Activated CD4-positive, alpha-beta T cell treated with anti-CD3 and anti-CD28 coated beads, Interleukin-2, amount 10 ng/mL, durations not matched to agents 7 days and 5 days (primary cell): ENCODE measurements at regions of chr3 and their contacts with region 1.

Region 1: GRCh38 chr3:45105855-45106671 is 40.1 kb downstream of the CDCP1 start:
- DNase-seq: peak; percentile 92
- H3K4me3 Mint-ChIP-seq: peak overlapping the region; percentile 1
- H3K27ac Mint-ChIP-seq: peak overlapping the region; percentile 68
- H3K4me1 Mint-ChIP-seq: peaks cover 86% of the 10 kb centered on the region
- H3K27me3 Mint-ChIP-seq: peaks cover 10% of the 10 kb centered on the region

Region 2: DNA sequence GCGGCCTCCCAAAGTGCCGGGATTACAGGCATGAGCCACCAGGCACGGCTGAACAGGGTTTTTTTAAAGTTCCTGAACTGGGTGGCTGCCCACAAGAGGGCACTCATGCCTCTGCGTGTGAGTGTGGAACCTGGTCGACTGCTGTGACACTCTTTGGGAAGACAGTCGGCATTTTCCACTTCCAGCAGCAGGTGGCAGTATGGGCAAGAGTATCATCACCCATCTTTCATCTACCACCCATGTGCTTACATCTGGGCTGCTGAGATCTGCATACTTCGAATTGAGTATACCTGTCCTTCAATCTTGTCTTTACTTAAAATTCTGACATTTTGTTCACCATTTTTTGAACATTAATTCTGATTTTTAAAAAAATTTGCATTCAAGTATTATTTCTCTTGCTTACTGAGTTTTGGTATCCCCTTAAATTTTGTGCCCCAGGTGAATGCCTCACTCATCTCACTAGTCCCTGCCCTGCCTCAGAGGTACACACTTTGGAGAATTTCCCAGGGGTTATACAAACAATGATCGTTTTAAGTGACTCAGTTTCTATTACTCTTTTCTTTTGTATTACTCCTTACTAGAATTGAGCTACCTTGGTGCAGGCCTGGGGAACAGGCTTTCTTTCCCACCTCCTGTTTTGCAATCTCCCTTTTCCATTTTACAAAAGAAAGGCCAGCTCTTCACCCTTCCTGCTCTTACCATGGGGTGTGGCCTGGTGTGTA is 68.2 kb before region 1 on chr3:
- CTCF ChIA-PET with region 1: interaction called, 11 read pairs
- POLR2A ChIA-PET with region 1: no interaction called
- DNase-seq: peak; percentile 96
- H3K4me3 Mint-ChIP-seq: peak overlapping the region; percentile 9
- H3K27ac Mint-ChIP-seq: peak overlapping the region; percentile 46
- H3K4me1 Mint-ChIP-seq: peaks cover 57% of the 10 kb centered on the region
- H3K27me3 Mint-ChIP-seq: peaks cover 31% of the 10 kb centered on the region

Region 3: DNA sequence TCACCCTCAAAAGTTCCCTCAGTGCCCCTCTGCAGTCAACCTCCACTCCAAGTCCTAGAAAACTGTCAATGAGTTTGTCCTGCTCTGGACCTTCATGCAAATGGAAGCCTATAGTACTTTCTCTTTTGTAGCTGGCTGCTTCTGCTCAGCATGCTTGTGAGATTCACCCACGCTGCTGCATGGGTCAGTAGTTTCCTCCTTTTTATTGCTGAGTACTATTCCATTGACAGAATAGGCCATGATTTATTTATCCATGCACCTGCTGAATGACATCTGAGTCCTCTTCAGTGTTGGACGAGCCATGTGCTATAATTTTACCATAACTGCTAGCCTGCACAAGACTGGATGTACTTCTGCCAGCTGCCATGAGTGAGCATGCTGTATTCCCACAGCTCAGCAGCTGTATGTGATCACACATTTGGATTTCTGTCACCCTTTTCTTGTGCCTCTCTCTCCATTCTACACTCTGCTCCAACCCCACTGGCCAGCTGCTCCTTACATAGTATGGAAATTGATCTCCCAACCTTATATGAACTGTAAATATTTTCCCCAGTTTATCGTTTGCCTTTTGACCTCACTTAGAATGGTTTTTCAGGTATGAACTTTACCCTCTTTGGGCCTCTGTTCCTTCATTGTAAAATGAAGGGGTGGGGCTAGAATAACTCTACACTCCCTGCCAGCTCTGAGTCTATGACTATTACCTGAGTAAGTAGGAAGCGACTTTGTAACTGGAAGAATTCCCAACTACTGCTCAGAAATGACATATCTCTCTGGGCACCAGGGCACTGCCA is 14.0 kb after region 1 on chr3:
- CTCF ChIA-PET with region 1: interaction called, 10 read pairs
- POLR2A ChIA-PET with region 1: no interaction called
- DNase-seq: no peak
- H3K4me3 Mint-ChIP-seq: no peak overlapping the region
- H3K27ac Mint-ChIP-seq: peak overlapping the region; percentile 57
- H3K4me1 Mint-ChIP-seq: peaks cover 60% of the 10 kb centered on the region
- H3K27me3 Mint-ChIP-seq: peaks cover 9% of the 10 kb centered on the region